Naive thymus-derived CD8-positive, alpha-beta T cell (primary cell): ENCODE measurements at regions of chr14 and their contacts with region 1.

Region 1: DNA sequence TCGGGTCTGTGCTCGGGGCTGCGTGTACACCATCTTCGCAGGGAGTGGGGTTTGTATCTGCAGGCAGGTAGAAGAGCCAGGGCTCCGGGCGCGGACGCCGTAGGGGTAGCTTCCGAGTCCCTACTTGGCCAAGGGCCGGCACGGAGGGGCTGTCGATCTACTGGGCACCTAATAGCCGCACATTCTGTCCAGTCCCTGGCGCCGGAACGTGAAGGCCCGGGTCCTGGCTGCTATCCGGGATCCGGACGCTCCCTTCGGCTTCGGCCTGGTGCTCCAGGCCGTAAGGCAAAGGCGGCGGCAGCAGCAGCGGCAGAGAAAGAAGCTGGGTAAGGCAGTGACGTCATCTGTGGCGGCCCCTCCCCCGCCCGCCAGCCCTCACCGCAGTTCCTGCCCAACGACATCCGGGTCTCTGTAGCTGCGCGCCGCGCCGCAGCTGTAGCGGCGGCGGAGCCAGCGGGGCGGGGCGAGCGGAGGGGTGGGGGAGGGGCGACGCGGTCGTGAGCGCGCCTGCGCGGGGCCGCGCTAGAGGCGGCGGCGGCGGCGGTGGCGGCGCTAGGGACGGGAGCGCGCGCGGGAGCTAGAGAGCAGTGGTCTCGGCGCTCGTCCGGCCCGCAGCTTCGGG is at the start of gene PPM1A:
- DNase-seq: peak; percentile 91 to 98 (median 94)
- ATAC-seq: peak; percentile 70 to 75
- H3K4me3 Mint-ChIP-seq: peak within 1 kb of the TSS; percentile 90 to 99 (median 98)
- H3K27ac Mint-ChIP-seq: peak within 1 kb of the TSS; percentile 98 to 100 (median 100)
- H3K4me1 Mint-ChIP-seq: peaks cover 29 to 57% (median 47%) of the 10 kb centered on the region in 4 donors
- H3K27me3 Mint-ChIP-seq: peaks cover 0 to 3% (median 0%) of the 10 kb centered on the region in 5 donors
- polyA plus RNA-seq, gene PPM1A: 15.0 to 18.0 (median 16.9) TPM

Region 2: GRCh38 chr14:59483900-59484638 is 764.7 kb before region 1 on chr14 and contains the starts of genes JKAMP and L3HYPDH:
- POLR2A ChIA-PET with region 1: interaction called, 12 read pairs
- DNase-seq: peak; percentile 94 to 99 (median 96)
- ATAC-seq: peak; percentile 90 to 94
- H3K4me3 Mint-ChIP-seq: peak within 1 kb of the TSS; percentile 86 to 99 (median 96)
- H3K27ac Mint-ChIP-seq: peak within 1 kb of the TSS; percentile 75 to 98 (median 94)
- H3K4me1 Mint-ChIP-seq: peaks cover 32 to 73% (median 65%) of the 10 kb centered on the region in 4 donors
- H3K27me3 Mint-ChIP-seq: no peaks in the 10 kb centered on the region
- polyA plus RNA-seq, gene JKAMP: 45.3 to 48.8 (median 46.0) TPM
- polyA plus RNA-seq, gene L3HYPDH: 1.8 to 2.5 (median 2.4) TPM

Region 3: GRCh38 chr14:59964251-59965007 is 284.4 kb before region 1 on chr14:
- POLR2A ChIA-PET with region 1: interaction called, 13 read pairs
- DNase-seq: peak in 4 of 10 donors; percentile 12 to 51 (median 28)
- ATAC-seq: peak; percentile 61 to 69
- H3K4me3 Mint-ChIP-seq: peak overlapping the region; percentile 86 to 99 (median 88)
- H3K27ac Mint-ChIP-seq: peak overlapping the region; percentile 89 to 98 (median 95)
- H3K4me1 Mint-ChIP-seq: peaks cover 12 to 19% (median 14%) of the 10 kb centered on the region in 4 donors
- H3K27me3 Mint-ChIP-seq: peaks cover 0 to 2% (median 0%) of the 10 kb centered on the region in 5 donors

Region 4: GRCh38 chr14:60091550-60092530 is 157.0 kb before region 1 on chr14 and contains the start of gene PCNX4:
- POLR2A ChIA-PET with region 1: interaction called, 21 read pairs
- DNase-seq: peak; percentile 81 to 98 (median 94)
- ATAC-seq: peak; percentile 89 to 91
- H3K4me3 Mint-ChIP-seq: peak within 1 kb of the TSS; percentile 86 to 96 (median 92)
- H3K27ac Mint-ChIP-seq: peak within 1 kb of the TSS; percentile 95 to 99 (median 99)
- H3K4me1 Mint-ChIP-seq: peaks cover 25 to 48% (median 44%) of the 10 kb centered on the region in 4 donors
- H3K27me3 Mint-ChIP-seq: no peaks in the 10 kb centered on the region
- polyA plus RNA-seq, gene PCNX4: 16.6 to 20.1 (median 17.6) TPM

Region 5: GRCh38 chr14:60164712-60165546 is 83.9 kb before region 1 on chr14 and contains the start of gene DHRS7:
- POLR2A ChIA-PET with region 1: interaction called, 31 read pairs
- DNase-seq: peak; percentile 32 to 78 (median 58)
- ATAC-seq: peak; percentile 78 to 80
- H3K4me3 Mint-ChIP-seq: peak within 1 kb of the TSS; percentile 95 to 100 (median 98)
- H3K27ac Mint-ChIP-seq: peak within 1 kb of the TSS; percentile 98 to 100 (median 99)
- H3K4me1 Mint-ChIP-seq: peaks cover 14 to 54% (median 53%) of the 10 kb centered on the region in 4 donors
- H3K27me3 Mint-ChIP-seq: no peaks in the 10 kb centered on the region
- polyA plus RNA-seq, gene DHRS7: 163 to 212 (median 167) TPM

Region 6: DNA sequence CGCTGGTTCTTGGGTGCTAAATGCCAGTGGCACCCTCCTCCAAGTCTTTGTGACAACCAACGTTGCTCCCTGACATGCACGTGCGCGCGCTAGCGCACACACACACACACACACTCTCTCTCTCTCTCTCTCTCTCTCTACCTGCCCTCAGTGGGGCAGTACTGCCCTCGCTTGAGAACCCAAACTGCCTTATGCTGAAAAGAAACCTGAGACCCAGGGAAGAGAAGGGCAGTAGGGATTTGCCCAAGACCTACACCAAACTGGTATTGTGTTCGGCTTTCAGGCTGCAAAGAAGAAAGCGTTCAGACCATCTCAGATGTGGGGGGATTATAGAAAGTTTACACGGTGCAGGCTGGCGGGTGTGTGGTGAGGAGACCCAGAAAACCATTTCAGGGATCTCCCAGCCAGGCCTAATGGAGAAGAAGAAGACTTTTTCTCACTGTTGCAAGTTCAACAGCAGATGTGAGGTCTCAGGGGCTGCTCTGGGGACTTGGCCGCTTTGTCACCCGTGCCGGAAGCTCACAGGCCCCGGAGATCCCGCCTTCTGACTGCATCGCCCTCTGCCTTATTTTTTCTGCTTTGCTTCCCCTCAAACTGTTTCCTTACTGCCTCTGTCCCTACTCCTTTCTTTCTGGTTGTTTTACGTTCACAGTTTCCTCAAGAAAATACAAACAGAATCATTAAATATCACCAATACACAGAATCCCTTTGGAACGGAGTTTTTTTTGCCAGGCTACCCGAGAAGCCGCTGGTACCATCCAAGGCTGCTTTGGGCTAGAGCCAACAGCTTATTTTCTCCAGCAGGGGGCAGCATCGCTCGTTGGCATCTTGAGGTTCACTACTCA is 82.6 kb after region 1 on chr14:
- POLR2A ChIA-PET with region 1: interaction called, 25 read pairs
- DNase-seq: peak; percentile 52 to 86 (median 75)
- ATAC-seq: peak; percentile 76 to 78
- H3K4me3 Mint-ChIP-seq: peak overlapping the region; percentile 85 to 100 (median 98)
- H3K27ac Mint-ChIP-seq: peak overlapping the region; percentile 84 to 98 (median 95)
- H3K4me1 Mint-ChIP-seq: peaks cover 12 to 30% (median 21%) of the 10 kb centered on the region in 4 donors
- H3K27me3 Mint-ChIP-seq: peaks cover 17 to 41% (median 27%) of the 10 kb centered on the region in 5 donors